ENCODE measurements at regions of chr12 and their contacts with region 1.

Region 1: DNA sequence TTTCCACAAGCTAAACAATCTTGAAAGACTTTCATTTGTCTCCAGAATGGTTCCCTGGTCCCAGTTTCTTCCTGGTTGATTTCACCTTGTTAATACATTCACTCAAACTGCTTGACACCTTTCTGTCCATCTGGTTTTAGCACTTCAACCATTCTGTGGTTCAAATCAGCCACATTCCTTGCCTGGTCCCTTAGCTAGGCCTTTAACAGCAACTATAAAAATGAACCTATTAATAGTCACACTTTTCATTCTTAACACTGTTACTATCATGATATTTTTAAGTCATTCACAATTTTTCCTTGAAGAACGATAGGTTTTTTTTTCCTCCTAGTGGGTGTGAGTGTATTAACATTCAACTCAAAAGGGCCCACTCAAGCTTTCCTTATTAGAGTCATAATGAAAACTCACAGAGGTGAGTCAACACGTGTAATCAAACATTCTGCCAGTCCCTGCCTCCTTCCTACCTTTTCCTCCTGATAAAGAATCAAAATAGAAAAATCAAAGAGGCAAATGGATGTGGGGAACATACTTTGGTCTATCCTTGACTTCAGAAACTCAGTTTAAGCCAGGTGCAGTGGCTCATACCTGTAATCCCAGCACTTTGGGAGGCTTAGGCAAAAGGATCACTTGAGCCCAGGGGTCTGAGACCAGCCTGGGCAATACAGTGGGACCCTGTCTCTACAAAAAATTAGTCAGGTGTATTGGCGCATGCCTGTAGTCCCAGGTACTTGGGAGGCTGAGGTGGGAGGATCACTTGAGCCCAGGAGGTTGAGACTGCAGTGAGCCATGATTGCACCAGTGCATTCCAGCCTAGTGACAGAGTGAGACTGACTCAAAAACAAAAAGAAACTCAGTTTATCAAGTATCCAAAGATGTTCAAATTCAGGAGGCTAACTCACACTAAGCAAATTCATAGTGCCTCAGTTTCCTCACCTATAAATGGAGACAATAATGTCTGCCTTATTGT is 34.5 kb upstream of the CCNT1 start:
- DNase-seq: no peak

Region 2: GRCh38 chr12:48671231-48671856 is 79.7 kb before region 1 on chr12:
- intact Hi-C with region 1: loop called in 1 of 2 experiments (anchors 2 kb)
- DNase-seq: no peak

Region 3: GRCh38 chr12:48903982-48904411 is 152.9 kb after region 1 on chr12:
- intact Hi-C with region 1: no loop called
- DNase-seq: peak; percentile 93

Region 4: DNA sequence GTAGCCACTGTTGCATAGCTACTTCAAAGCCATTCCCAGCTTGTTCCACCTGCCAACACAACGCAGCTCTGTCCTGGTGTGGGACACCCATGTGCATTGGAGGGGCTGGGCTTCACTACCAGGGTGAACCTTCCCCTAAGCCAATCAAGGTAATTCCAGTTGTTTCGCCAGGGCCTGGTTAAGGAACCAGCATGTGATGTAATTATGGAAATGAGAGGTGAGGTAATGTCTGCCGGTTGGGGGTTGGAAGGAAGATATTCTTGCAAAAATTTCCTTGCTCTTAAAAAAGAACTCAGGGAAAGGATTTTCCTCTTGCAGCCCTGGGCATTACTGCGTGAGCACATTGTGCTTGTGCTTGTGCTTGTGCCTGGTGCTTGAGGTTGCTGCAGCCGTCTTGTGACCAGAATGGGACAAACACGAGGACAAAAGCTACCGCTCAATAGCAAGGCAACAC is 528.7 kb after region 1 on chr12:
- intact Hi-C with region 1: no loop called
- DNase-seq: no peak

Measured in posterior vena cava (tissue), 2 donors.